ENCODE measurements at regions of chr1 and their contacts with region 1.

Region 1: GRCh38 chr1:85576642-85577418 is 3.7 kb upstream of the CCN1 start:
- DNase-seq: peak; percentile 88
- ATAC-seq: peak; percentile 46
- H3K4me3 ChIP-seq: peak overlapping the region; percentile 79
- H3K27ac ChIP-seq: peak overlapping the region; percentile 49
- H3K4me1 ChIP-seq: peaks cover 47% of the 10 kb centered on the region
- H3K27me3 ChIP-seq: no peaks in the 10 kb centered on the region
- CTCF ChIP-seq: peak; percentile 70

Region 2: GRCh38 chr1:85307987-85308832 is 268.6 kb before region 1 on chr1:
- CTCF ChIA-PET with region 1: no interaction called
- POLR2A ChIA-PET with region 1: no interaction called
- intact Hi-C with region 1: loop called (anchors 1 kb)
- DNase-seq: peak; percentile 93
- ATAC-seq: peak; percentile 98
- H3K4me3 ChIP-seq: peak overlapping the region; percentile 11; the same call in 1 of the 2 replicates
- H3K27ac ChIP-seq: peak overlapping the region; percentile 23
- H3K4me1 ChIP-seq: peaks cover 18% of the 10 kb centered on the region
- H3K27me3 ChIP-seq: no peaks in the 10 kb centered on the region
- CTCF ChIP-seq: peak; percentile 99

Region 3: GRCh38 chr1:85360730-85361493 is 215.9 kb before region 1 on chr1:
- CTCF ChIA-PET with region 1: no interaction called
- POLR2A ChIA-PET with region 1: interaction called, 6 read pairs
- intact Hi-C with region 1: loop called (anchors 1 kb)
- DNase-seq: peak; percentile 83
- ATAC-seq: peak; percentile 70
- H3K4me3 ChIP-seq: 0 out of 2 replicates have a peak overlapping the region, but pooled peaks have one; percentile 5
- H3K27ac ChIP-seq: peak overlapping the region; percentile 84
- H3K4me1 ChIP-seq: peaks cover 41% of the 10 kb centered on the region
- H3K27me3 ChIP-seq: no peaks in the 10 kb centered on the region
- CTCF ChIP-seq: no peak

Region 4: DNA sequence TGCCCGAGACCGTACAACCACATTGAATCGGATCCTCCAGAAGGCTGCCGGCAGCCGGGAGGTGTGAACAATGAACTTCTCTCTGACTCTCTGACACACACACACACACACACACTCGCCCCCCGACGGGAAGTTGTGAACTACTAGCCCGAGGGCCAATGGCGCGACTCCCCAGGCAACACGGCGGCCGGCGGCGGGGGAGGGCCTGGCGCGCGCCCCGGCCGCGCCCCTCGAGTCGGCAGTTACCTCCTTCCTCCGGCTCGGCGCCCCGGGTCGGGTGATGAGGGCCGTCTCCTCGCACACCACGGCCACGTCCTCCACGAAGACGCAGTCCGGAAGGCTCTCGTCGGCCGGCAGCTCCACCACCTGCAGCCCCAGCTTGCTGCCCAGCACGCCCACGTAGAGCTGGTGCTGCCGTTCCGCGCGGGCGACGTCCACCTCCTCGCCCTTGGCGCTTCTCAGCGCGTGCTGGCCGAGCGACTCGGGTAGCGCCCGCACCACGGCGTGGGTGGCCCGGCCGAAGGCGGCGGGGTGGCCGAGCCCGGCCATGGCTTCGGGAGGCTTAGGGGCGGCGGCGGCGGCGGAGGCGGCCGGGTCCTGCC is 112.2 kb before region 1 on chr1:
- CTCF ChIA-PET with region 1: interaction called, 3 read pairs
- POLR2A ChIA-PET with region 1: interaction called, 4 read pairs
- intact Hi-C with region 1: loop called (anchors 1 kb)
- DNase-seq: peak; percentile 73
- ATAC-seq: peak; percentile 69
- H3K4me3 ChIP-seq: peak overlapping the region; percentile 94
- H3K27ac ChIP-seq: no peak overlapping the region
- H3K4me1 ChIP-seq: peaks cover 48% of the 10 kb centered on the region
- H3K27me3 ChIP-seq: no peaks in the 10 kb centered on the region
- CTCF ChIP-seq: no peak

Region 5: DNA sequence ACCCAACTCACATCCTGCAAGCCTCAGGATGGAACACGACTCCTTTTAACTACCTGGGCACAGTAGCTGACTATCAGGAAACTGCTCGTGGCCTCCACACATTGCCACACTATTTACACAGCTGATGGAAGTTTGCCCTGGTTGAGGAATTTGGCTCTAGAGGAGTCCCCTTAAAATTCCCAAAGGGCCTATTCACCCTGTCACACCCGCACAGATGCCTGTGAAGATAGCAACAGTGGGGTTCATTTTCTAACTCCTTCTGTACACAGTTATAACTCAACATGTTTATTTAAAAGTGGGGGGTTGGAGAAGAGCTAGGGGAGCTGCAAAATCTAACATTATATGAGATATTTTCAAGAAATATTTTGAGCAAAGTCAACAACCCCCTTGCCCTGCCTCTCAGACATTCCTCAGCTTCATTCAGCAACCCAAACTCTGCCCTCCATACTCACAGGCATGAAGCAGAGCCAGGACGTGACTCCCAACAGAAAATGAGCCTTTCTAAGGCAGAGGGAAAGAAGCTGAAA is 32.1 kb before region 1 on chr1:
- CTCF ChIA-PET with region 1: interaction called, 4 read pairs
- POLR2A ChIA-PET with region 1: interaction called, 14 read pairs
- intact Hi-C with region 1: loop called (anchors 1 kb)
- DNase-seq: peak; percentile 99
- ATAC-seq: peak; percentile 87
- H3K4me3 ChIP-seq: peak overlapping the region; percentile 25; the same call in 1 of the 2 replicates
- H3K27ac ChIP-seq: peak overlapping the region; percentile 52
- H3K4me1 ChIP-seq: peaks cover 55% of the 10 kb centered on the region
- H3K27me3 ChIP-seq: no peaks in the 10 kb centered on the region
- CTCF ChIP-seq: no peak

Region 6: GRCh38 chr1:85654066-85654782 is 77.4 kb after region 1 on chr1:
- CTCF ChIA-PET with region 1: interaction called, 3 read pairs
- POLR2A ChIA-PET with region 1: interaction called, 13 read pairs
- intact Hi-C with region 1: no loop called
- DNase-seq: peak; percentile 82
- ATAC-seq: peak; percentile 81
- H3K4me3 ChIP-seq: 0 out of 2 replicates have a peak overlapping the region, but pooled peaks have one; percentile 4
- H3K27ac ChIP-seq: peak overlapping the region; percentile 81
- H3K4me1 ChIP-seq: peaks cover 43% of the 10 kb centered on the region
- H3K27me3 ChIP-seq: no peaks in the 10 kb centered on the region
- CTCF ChIP-seq: no peak

Measured in PC-3 (cell line).